ENCODE measurements at regions of chr20 and their contacts with region 1.

Region 1: GRCh38 chr20:49424536-49424935 is 57.9 kb downstream of the KCNB1 start:
- DNase-seq: no peak
- H3K4me3 ChIP-seq: no peak overlapping the region
- CTCF ChIP-seq: no peak
- POLR2A ChIP-seq: no peak

Region 2: GRCh38 chr20:48098067-48098466 is 1326.5 kb before region 1 on chr20:
- intact Hi-C with region 1: loop called (anchors 10 kb)
- DNase-seq: peak in 1 of 2 donors; percentile 66
- H3K4me3 ChIP-seq: no peak overlapping the region
- CTCF ChIP-seq: no peak
- POLR2A ChIP-seq: no peak

Region 3: DNA sequence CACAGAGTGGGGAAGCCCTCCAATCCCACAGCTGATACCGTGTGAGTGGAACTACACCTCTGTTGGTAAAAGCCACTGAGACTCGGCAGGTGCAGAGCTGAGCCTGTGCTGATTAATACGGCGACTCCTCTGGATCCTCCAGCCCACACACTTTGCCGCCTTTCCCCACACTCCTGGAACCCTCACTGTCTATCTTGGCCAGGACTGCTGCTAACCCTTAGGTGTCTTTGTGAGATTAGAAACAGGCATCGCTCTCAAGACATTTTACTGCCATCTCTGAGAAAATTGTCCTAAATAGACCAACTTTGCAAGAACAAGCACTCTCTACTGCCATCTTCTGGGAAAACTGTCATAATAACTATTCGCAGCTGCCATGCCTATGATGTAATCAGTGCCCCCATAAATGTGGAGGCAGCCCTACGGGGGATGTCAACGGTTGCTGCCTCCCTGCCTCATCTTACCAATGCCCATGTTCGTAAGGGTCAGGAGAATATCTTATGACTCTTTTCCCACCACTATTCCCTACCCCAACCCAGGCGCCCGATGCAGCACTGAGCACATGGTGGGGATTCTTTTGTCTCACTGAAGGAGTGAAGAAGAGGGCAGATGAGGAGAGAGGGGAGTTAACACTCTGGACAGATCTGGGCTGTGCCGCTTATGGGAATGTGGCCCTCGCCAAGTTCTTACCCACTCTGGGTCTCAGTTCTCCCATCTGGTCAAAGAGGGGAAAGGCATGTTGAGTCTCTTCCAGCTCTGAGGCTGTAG is 84.1 kb after region 1 on chr20:
- intact Hi-C with region 1: no loop called
- DNase-seq: no peak
- H3K4me3 ChIP-seq: no peak overlapping the region
- CTCF ChIP-seq: no peak
- POLR2A ChIP-seq: no peak